Activated T-helper 1 cell treated with anti-CD3 and anti-CD28 coated beads, Interleukin-12 subunit alpha, Interleukin-12 subunit beta, Interleukin-2, Interleukin-4 antibody, amounts not matched to agents 30 ng/mL and 10 ng/mL and 1 ng/mL, durations not matched to agents 14 hours and 24 hours and 36 hours (primary cell): ENCODE measurements at regions of chr2 and their contacts with region 1.

Region 1: DNA sequence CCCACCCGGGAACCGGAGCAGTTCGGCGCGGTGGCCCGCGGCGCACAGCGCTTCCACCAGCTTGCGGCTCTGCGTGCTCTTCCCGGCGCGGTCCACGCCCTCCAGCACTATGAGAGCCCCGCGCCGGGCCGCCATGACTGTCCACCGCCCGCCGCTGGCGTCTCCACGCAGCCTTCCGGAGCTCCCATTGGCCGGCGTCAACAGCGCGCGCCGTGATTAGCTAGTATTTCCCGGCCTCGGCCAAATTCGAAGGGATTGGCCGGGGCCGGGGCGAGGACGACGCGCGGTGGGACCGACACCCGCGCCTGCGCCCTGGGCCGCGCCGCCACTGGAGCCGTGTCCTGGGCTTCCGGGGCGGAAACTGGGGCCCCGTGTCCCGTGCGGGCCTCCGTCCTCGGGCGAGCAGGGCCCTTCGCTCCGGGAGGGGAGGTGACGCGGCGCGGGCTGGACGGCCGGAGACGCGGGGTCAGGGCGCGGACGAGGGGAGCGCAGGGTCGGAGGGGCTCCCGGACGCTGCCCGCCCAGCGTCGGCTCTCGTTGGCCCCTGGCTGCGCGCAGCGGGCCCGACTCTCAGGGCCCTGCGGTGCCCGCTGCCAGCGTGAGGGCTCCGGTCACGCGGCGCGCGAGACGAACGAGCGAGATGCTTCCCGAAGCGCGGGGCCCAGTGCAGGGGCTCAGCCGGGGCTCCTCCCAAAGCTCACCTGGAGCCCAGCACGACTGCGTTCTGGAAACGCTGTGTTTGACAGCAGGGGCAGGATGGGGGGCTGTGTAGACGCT is at the start of gene DTYMK:
- DNase-seq: peak; percentile 97
- H3K4me3 Mint-ChIP-seq: peak within 1 kb of the TSS; percentile 96
- H3K27ac Mint-ChIP-seq: peak within 1 kb of the TSS; percentile 98
- H3K4me1 Mint-ChIP-seq: peaks cover 28% of the 10 kb centered on the region
- H3K27me3 Mint-ChIP-seq: no peaks in the 10 kb centered on the region
- total RNA-seq, gene DTYMK: 102 and 106 TPM in 2 replicates

Region 2: DNA sequence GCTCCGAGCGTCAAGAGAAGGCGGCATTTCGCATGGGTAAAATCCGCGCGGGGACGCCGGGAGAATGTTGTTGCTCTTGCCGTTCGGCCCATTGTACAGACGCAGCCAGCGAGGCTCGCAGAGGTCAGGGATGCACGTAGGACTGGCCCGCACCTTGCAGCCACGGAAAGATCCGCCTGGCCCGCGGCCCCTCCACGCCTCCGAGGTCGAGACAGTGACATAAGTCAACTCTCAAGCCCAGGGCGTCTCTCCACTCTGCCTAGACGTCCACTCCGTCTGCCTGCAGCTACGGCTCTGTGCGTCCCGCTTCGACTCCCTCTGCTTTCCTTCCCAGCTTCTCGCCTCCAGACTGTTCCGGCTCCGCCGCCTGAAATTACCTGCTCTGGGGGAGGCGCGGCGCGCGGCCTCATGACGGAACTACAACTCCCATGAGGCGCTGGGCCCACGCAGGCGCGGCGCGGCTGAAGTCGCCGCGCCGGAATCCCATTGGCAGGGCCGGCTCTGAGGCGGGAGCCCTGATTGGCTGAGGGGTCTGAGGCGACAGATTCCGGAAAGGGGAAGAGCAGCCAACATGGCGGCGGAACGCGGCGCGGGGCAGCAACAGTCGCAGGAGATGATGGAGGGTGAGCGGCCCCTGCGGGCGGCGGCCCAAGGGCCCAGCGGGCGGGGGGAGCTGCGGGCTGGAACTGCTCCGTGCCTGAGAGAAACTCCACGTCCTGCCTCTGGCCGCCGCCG is 536.7 kb before region 1 on chr2 and contains the start of gene PPP1R7:
- intact Hi-C with region 1: loop called (anchors 1 kb)
- DNase-seq: peak; percentile 91
- H3K4me3 Mint-ChIP-seq: peak within 1 kb of the TSS; percentile 95
- H3K27ac Mint-ChIP-seq: peak within 1 kb of the TSS; percentile 95
- H3K4me1 Mint-ChIP-seq: peaks cover 61% of the 10 kb centered on the region
- H3K27me3 Mint-ChIP-seq: no peaks in the 10 kb centered on the region
- total RNA-seq, gene PPP1R7: 115 and 118 TPM in 2 replicates

Region 3: GRCh38 chr2:241577413-241578122 is 109.3 kb before region 1 on chr2:
- intact Hi-C with region 1: no loop called
- DNase-seq: no peak
- H3K4me3 Mint-ChIP-seq: no peak overlapping the region
- H3K27ac Mint-ChIP-seq: no peak overlapping the region
- H3K4me1 Mint-ChIP-seq: no peaks in the 10 kb centered on the region
- H3K27me3 Mint-ChIP-seq: no peaks in the 10 kb centered on the region

Region 4: DNA sequence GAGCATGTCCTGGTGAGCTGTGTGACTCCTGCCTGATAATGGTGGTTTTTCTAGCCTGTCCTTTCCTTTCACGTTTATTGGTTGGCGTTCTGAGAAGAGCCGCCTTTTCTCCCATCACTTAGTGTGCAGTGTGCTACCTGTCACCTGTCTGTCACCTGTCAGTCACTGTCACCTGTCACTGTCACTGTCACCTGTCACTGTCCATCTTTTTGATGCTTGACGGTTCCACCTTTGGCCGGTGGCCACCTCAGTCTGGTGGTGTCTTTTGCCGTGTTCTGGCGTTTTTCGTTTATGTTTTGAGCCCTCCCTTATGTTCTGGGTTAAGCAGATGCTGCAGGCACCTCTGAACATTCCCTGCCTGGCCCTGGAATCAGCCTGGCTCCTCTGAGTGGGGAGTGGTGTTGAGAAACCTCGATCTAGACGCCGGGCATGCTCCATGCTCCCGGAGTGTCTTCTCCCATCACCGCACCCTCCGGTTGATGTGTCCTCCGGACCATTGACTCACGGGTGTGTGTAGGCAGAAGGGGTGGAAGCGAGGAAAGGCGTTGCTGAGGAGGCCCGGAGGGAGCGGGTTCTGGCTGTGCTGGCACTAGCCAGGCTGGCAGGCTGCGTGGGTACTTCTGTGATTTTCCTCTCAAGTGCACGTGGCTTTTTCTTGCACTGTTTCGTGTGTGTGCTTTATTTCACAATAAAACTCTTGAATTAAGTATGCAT is 21.0 kb before region 1 on chr2:
- intact Hi-C with region 1: loop called (anchors 1 kb)
- DNase-seq: no peak
- H3K4me3 Mint-ChIP-seq: no peak overlapping the region
- H3K27ac Mint-ChIP-seq: peak overlapping the region; percentile 76
- H3K4me1 Mint-ChIP-seq: peaks cover 10% of the 10 kb centered on the region
- H3K27me3 Mint-ChIP-seq: no peaks in the 10 kb centered on the region

Region 5: DNA sequence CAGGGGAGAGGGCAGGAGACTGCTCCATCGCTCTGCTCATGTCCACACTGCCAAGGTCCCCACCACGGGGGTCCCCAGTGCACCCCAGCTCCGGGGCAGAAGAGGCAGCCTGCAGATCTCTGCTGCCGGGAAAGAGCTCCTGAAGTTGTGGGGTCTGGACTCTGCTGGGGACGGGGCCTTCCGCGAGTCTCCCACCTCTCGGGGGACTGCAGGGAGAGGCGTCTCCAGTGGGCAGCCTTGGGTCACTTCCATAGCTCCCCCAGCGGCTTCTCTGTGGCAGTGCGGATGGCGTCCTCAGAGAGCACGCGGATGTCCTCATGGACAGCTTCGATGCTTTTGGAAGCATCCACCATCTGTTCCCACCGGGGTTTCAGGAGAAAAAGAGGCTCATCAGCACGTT is 11.0 kb before region 1 on chr2:
- intact Hi-C with region 1: no loop called
- DNase-seq: no peak
- H3K4me3 Mint-ChIP-seq: no peak overlapping the region
- H3K27ac Mint-ChIP-seq: no peak overlapping the region
- H3K4me1 Mint-ChIP-seq: peaks cover 4% of the 10 kb centered on the region
- H3K27me3 Mint-ChIP-seq: no peaks in the 10 kb centered on the region

Region 6: DNA sequence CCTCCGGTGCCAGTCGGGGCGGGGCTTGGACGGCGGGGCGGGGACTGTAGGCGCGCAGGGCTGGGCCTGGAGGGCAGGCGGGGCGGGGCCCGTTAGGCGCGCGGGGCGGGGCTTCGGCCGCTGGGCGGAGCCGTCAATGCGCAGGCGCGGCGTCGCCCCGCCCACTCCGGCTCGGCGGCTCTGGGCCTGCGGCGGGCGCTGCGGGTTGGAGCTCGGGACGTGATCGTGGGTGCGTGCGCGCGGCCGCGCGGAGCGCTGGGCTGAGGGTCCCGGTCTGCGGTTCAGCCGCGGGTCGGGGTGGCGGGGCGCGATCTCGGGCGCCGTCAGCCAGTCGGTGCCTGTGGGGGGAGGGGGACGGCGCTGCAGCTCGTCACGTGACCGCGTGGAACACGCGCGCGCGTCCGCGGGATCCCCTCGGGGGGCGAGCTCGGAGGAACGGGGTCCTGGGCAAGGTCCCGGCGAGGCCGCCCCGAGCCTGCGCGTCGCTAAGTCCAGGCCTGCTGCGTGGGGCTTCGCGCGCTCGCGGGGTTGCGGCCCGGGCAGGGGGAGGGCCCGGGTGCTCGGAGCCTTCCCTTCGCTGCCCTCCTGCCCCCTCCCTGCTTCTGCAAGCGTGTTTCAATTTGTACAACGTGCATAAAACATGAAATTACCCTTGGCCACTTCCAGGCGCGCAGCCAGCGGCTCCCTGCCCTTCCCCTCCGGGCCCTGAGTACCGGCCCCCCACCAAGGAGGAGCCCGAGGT is 47.8 kb after region 1 on chr2 and contains the start of gene D2HGDH:
- intact Hi-C with region 1: loop called (anchors 1 kb)
- DNase-seq: peak; percentile 89
- H3K4me3 Mint-ChIP-seq: peak within 1 kb of the TSS; percentile 82
- H3K27ac Mint-ChIP-seq: no peak within 1 kb of the TSS
- H3K4me1 Mint-ChIP-seq: peaks cover 41% of the 10 kb centered on the region
- H3K27me3 Mint-ChIP-seq: peaks cover 3% of the 10 kb centered on the region
- total RNA-seq, gene D2HGDH: 27.1 and 28.7 TPM in 2 replicates